ENCODE measurements at regions of chr11 and their contacts with region 1.

Region 1: GRCh38 chr11:78699609-78700135 is 125.0 kb upstream of the NARS2 start:
- DNase-seq: no peak
- ATAC-seq: no peak
- H3K4me3 Mint-ChIP-seq: no peak overlapping the region
- H3K27ac Mint-ChIP-seq: no peak overlapping the region
- H3K4me1 Mint-ChIP-seq: no peaks in the 10 kb centered on the region
- H3K27me3 Mint-ChIP-seq: peaks cover 5% of the 10 kb centered on the region

Region 2: DNA sequence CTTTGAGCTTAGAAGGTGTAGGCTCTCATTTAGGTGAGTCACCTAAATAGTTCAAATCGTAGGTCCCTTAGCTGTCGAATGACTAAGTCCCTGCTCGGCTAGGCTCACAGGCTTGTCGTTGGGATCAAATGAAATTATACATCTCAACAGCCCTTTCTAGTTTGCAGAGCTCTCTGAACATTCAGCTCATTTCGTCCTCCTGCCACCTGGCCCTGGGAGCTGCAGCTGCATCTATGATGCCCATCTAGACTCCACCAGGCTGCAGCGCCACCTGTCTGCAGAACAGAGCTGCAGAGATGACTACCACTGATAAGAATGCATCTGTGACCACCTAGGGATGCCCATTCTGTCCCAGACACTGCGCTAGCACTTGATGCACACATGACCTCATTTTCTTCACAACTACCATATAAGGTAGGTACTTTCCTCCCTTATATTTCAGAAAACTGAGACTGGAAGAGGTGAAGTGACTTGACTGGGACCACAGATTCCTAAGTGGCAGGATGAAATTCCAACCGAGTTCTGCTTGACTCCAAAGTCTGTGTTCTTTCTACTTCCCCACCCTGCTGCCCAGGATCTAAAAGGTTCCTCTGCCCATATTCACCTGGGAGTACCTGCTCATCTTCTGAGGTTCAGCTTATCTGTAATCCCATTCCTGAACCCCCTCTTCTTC is 16.1 kb after region 1 on chr11:
- CTCF ChIA-PET with region 1: interaction called, 10 read pairs
- POLR2A ChIA-PET with region 1: no interaction called
- DNase-seq: peak; percentile 52
- ATAC-seq: peak; percentile 44
- H3K4me3 Mint-ChIP-seq: no peak overlapping the region
- H3K27ac Mint-ChIP-seq: no peak overlapping the region
- H3K4me1 Mint-ChIP-seq: no peaks in the 10 kb centered on the region
- H3K27me3 Mint-ChIP-seq: peaks cover 4% of the 10 kb centered on the region